Transverse colon (tissue), 4 donors: ENCODE measurements at regions of chr19 and their contacts with region 1.

Region 1: DNA sequence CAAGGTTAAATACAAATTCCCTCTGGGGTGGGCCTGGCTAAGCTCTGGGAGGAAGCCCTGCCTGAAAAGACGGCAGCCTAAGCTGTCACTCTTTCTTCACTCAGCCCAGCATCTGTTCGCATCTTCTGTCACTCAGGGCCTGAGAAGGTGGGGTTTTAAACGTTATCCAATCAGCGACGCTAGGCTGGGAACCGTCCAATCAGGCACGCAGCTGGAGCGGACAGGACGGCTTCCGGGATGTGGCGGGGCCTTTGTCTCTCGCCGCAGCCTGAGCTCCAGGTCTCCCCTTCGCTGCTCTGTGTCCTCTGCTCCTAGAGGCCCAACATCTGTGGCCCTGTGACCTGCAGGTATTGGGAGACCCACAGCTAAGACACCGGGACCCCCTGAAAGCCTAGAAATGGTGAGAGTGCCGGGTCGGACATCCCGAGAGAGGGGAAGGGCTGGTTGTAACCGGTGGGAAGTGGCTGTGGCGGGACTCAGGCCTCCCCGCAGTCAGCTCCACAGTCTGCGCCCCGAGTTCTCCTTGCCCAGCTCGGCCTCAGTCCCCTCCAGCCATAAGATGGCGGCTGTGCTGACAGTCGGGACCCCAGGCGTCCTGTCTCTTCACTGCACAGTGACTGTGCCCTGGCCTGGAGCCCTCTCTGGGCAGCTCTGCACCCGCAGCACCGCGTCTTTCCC is at the start of gene ZNF431:
- DNase-seq: peak; percentile 93
- H3K4me3 ChIP-seq: peak within 1 kb of the TSS; percentile 52 to 80 (median 68)
- H3K27ac ChIP-seq: peak within 1 kb of the TSS; percentile 74 to 87 (median 81)
- H3K4me1 ChIP-seq: peaks cover 0 to 12% (median 6%) of the 10 kb centered on the region in 4 donors
- H3K27me3 ChIP-seq: no peaks in the 10 kb centered on the region
- CTCF ChIP-seq: no peak
- EP300 ChIP-seq: no peak
- POLR2A ChIP-seq: peak; percentile 76
- total RNA-seq, gene ZNF431: 7.4 to 18.0 (median 17.4) TPM

Region 2: DNA sequence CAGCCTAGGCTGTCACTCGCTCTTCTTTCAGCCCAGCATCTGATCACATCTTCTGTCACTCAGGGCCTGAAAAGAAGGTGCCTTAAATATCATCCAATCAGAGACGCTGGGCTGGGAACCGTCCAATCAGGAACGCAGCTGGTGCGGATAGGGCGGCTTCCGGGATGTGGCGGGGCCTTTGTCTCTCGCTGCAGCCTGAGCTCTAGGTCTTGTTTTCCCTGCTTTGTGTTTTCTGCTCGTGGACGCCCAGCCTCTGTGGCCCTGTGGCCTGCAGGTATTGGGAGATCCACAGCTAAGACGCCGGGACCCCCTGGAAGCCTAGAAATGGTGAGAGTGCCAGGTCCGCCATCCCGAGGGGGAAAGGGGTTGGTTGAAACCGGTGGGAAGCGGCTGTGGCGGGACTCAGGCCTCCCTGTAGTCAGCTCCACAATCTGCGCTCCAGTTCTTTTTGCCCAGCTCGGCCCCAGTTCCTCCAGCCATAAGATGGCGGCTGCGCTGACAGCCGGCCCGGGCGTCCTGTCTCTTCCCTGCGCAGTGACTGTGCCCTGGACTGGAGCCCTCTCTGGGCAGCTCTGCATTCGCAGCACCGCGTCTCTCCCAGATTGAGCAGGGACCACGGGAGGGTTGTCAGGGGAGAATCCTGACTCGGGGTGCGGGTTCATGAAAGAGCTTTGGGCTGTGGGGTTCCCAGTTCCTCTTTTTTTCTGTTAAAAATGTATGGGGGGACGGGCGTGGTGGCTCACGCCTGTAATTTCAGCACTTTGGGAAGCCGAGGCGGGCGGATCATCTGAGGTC is 218.7 kb before region 1 on chr19 and contains the start of gene ZNF85:
- in situ Hi-C with region 1: no loop called
- intact Hi-C with region 1: loop called (anchors 5 kb)
- DNase-seq: peak; percentile 88
- H3K4me3 ChIP-seq: peak within 1 kb of the TSS; percentile 48 to 88 (median 60)
- H3K27ac ChIP-seq: peak within 1 kb of the TSS; percentile 82 to 91 (median 87)
- H3K4me1 ChIP-seq: peaks cover 0 to 8% (median 2%) of the 10 kb centered on the region in 4 donors
- H3K27me3 ChIP-seq: no peaks in the 10 kb centered on the region
- CTCF ChIP-seq: no peak
- EP300 ChIP-seq: no peak
- POLR2A ChIP-seq: peak; percentile 43
- total RNA-seq, gene ZNF85: 2.8 to 9.7 (median 7.2) TPM

Region 3: DNA sequence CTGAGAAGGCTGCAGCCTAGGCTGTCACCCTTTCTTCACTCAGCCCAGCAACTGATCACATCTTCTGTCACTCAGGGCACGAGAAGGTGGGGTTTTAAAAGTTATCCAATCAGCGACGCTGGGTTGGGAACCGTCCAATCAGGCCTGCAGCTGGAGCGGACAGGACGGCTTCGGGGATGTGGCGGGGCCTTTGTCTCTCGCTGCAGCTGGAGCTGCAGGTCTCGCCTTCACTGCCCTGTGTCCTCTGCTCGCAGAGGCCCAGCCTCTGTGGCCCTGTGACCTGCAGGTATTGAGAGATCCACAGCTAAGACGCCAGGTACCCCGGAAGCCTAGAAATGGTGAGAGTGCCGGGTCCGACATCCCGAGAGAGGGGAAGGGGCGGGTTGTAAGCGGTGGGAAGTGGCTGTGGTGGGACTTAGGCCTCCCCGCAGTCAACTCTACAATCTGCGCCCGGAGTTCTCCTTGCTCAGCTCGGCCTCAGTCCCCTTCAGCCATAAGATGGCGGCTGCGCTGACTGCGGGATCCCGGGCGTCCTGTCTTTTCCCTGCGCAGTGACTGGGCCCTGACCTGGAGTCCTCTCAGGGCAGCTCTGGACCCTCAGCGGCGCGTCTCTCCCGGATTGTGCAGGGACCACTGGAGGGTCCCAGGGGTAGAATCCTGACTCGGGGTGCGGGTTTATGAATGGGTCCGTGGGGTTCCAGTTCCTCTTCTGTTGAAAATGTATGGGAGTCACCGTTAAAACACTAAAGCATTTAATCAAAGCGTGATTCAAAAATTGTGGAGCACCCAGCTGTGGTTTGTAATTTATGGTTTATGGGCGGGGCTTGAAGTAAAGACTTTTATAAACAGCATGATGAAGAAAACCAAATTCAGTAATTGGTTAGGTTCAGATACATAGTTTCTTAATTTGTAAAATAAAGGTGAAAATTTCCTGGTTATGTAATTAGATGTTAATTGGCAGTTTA is 59.6 kb before region 1 on chr19 and contains the start of gene ZNF714:
- in situ Hi-C with region 1: loop called in 1 of 4 experiments (anchors 10 kb)
- intact Hi-C with region 1: no loop called
- DNase-seq: peak; percentile 84
- H3K4me3 ChIP-seq: peak within 1 kb of the TSS; percentile 26 to 87 (median 66)
- H3K27ac ChIP-seq: peak within 1 kb of the TSS; percentile 63 to 88 (median 83)
- H3K4me1 ChIP-seq: peaks cover 0 to 12% (median 6%) of the 10 kb centered on the region in 4 donors
- H3K27me3 ChIP-seq: no peaks in the 10 kb centered on the region
- CTCF ChIP-seq: no peak
- EP300 ChIP-seq: no peak
- POLR2A ChIP-seq: peak; percentile 86
- total RNA-seq, gene ZNF714: 4.1 to 19.5 (median 11.6) TPM

Region 4: DNA sequence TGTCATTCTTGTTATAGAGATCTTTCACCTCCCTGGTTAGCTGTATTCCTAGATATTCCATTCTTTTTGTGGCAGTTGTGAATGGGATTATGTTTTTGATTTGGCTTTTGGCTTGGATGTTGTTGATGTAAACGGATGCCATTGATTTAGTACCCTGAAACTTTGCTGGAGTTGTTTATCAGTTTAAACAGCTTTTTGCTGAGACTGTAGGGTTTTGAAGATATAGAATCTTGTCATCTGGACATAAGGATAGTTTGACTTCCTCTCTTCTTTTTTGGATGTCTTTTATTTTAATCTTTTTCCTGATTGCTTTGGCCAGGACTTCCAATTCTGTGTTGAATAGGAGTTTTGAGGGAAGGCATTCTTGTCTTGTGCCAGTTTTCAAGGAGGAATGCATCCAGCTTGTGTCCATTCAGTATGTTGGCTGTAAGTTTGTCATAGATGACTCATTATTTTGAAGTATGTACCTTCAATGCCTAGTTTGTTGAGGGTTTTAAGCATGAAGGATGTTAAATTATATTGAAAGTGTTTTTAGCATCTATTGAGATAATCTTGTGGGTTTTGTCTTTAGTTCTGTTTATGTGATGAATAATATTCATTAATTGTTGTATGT is 16.7 kb after region 1 on chr19:
- in situ Hi-C with region 1: no loop called
- intact Hi-C with region 1: no loop called
- DNase-seq: no peak
- H3K4me3 ChIP-seq: no peak overlapping the region
- H3K27ac ChIP-seq: no peak overlapping the region
- H3K4me1 ChIP-seq: no peaks in the 10 kb centered on the region
- H3K27me3 ChIP-seq: no peaks in the 10 kb centered on the region
- CTCF ChIP-seq: no peak
- EP300 ChIP-seq: no peak
- POLR2A ChIP-seq: no peak